ENCODE measurements at regions of chr4 and their contacts with region 1.

Region 1: DNA sequence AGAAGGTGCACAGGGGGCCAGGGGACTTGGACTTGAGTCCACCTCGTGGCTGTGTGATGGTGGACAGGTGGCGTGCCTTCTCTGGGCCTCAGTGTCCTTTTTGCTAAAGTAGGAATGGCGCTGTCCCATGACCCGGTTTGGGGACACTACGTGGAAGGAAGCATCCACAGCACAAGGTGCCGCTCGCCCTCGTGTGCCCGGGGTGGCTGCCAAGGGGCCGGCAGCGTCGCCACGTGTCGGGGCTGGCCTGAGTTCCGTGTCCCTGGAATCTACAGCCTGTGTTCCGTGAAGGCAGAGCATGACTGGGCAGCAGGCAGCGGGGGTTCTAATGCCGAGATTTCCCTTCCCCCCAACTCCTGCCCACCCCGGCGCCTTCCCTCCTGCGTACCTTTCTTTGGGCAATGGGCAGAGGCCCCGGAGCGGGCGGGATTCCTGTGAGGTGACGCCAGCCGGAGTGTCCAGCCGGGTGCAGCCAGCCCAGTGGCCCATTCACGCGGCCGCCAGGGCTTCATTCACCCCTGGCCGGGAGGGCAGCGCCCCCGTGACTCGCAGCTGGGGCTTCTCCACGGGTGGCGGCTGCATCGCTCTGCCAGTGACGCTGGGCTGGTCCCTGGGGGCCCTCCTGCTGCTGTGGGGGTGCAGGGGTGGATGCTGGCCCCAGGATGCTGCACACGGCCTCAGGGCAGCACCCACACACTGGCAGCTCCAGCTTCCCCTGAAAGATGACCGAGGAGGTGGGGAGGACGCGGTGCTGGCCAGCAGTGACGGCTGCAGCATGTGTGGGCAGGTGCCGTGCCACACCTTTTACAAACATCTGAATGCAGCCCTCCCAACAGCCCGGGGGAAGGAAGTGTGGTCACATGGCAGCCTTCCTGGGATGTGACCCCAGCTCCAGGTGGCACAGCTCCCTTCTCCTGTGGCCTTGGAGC is 21.2 kb downstream of the DOK7 start:
- DNase-seq: peak; percentile 89

Region 2: GRCh38 chr4:3305598-3306371 is 178.5 kb before region 1 on chr4:
- intact Hi-C with region 1: no loop called
- DNase-seq: peak; percentile 61

Region 3: GRCh38 chr4:3461478-3462291 is 22.6 kb before region 1 on chr4:
- intact Hi-C with region 1: loop called (anchors 1 kb)
- DNase-seq: peak; percentile 90